PC-9 (cell line): ENCODE measurements at regions of chr20 and their contacts with region 1.

Region 1: GRCh38 chr20:6074145-6074561 is 20.3 kb upstream of the LRRN4 start:
- DNase-seq: no peak
- H3K4me3 ChIP-seq: no peak overlapping the region
- H3K27ac ChIP-seq: no peak overlapping the region
- H3K4me1 ChIP-seq: no peaks in the 10 kb centered on the region
- H3K27me3 ChIP-seq: no peaks in the 10 kb centered on the region
- CTCF ChIP-seq: peak; percentile 65

Region 2: GRCh38 chr20:5950271-5951031 is 123.7 kb before region 1 on chr20 and contains the starts of genes MCM8 and TRMT6:
- CTCF ChIA-PET with region 1: no interaction called
- POLR2A ChIA-PET with region 1: no interaction called
- intact Hi-C with region 1: loop called (anchors 1 kb)
- DNase-seq: peak; percentile 95 to 96
- H3K4me3 ChIP-seq: peak within 1 kb of the TSS; percentile 97
- H3K27ac ChIP-seq: peak within 1 kb of the TSS; percentile 45; the same call in 1 of the 2 replicates
- H3K4me1 ChIP-seq: peaks cover 26% of the 10 kb centered on the region
- H3K27me3 ChIP-seq: no peaks in the 10 kb centered on the region
- CTCF ChIP-seq: no peak
- total RNA-seq, gene MCM8: 18.2 and 22.4 TPM in 2 replicates
- total RNA-seq, gene TRMT6: 12.2 and 16.2 TPM in 2 replicates

Region 3: DNA sequence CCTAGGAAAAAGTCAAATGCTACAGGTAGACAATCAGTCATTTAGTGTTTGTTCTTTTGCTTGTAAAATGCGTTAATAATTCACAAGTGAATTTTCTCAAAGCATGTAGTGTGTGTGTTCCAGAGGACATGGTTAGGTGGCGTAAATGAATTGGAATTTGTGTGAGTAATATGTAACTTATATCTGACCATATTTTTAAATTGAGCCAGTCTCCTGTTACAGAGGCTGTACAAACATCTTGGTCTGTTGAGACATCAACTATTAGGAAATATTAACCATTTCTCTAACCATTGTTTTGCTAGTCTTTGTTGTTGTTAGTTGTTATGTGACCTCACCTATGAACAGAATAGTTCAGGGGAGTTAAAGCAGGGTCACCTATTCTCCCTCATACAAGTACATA is 101.0 kb before region 1 on chr20:
- CTCF ChIA-PET with region 1: no interaction called
- POLR2A ChIA-PET with region 1: no interaction called
- intact Hi-C with region 1: no loop called
- DNase-seq: peak in 1 of 2 experiments; percentile 68
- H3K4me3 ChIP-seq: no peak overlapping the region
- H3K27ac ChIP-seq: peak overlapping the region; percentile 21; the same call in 1 of the 2 replicates
- H3K4me1 ChIP-seq: 0 out of 2 replicates have a peak, but pooled peaks cover 4% of the 10 kb centered on the region
- H3K27me3 ChIP-seq: no peaks in the 10 kb centered on the region
- CTCF ChIP-seq: no peak

Region 4: GRCh38 chr20:6008254-6008653 is 65.9 kb before region 1 on chr20:
- CTCF ChIA-PET with region 1: no interaction called
- POLR2A ChIA-PET with region 1: no interaction called
- intact Hi-C with region 1: loop called (anchors 1 kb)
- DNase-seq: peak; percentile 62 to 94
- H3K4me3 ChIP-seq: peak overlapping the region; percentile 97; the same call in 1 of the 2 replicates
- H3K27ac ChIP-seq: no peak overlapping the region
- H3K4me1 ChIP-seq: peaks cover 29% of the 10 kb centered on the region
- H3K27me3 ChIP-seq: no peaks in the 10 kb centered on the region
- CTCF ChIP-seq: no peak